ENCODE measurements at regions of chr18 and their contacts with region 1.

Region 1: DNA sequence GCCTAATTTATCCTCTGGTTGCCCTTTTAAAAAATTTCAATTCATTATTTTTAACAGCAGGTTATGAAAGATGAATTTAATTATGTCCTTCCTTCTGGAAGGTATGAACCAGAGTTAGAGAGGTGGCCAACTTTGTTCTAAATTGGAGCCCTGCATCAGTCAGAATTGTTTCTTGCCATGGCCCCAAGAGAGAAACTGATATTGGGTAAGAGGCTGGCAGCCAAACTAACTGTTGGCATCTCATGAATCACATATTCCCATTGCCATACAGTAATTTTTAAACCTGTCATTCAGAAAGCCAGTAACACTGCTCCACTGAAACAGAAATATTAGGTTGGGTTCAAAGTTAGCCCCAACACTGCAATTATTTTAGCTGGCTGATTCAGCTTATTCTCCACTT is 67.4 kb downstream of the SMAD2 start:
- DNase-seq: no peak
- ATAC-seq: no peak
- H3K4me3 Mint-ChIP-seq: no peak overlapping the region
- H3K27ac Mint-ChIP-seq: no peak overlapping the region
- H3K4me1 Mint-ChIP-seq: peaks cover 5% of the 10 kb centered on the region
- H3K27me3 Mint-ChIP-seq: no peaks in the 10 kb centered on the region

Region 2: GRCh38 chr18:47323158-47323557 is 539.9 kb before region 1 on chr18:
- CTCF ChIA-PET with region 1: no interaction called
- POLR2A ChIA-PET with region 1: no interaction called
- intact Hi-C with region 1: loop called in 1 of 2 experiments (anchors 10 kb)
- DNase-seq: no peak
- ATAC-seq: peak; percentile 84
- H3K4me3 Mint-ChIP-seq: no peak overlapping the region
- H3K27ac Mint-ChIP-seq: no peak overlapping the region
- H3K4me1 Mint-ChIP-seq: no peaks in the 10 kb centered on the region
- H3K27me3 Mint-ChIP-seq: peaks cover 5% of the 10 kb centered on the region

Region 3: DNA sequence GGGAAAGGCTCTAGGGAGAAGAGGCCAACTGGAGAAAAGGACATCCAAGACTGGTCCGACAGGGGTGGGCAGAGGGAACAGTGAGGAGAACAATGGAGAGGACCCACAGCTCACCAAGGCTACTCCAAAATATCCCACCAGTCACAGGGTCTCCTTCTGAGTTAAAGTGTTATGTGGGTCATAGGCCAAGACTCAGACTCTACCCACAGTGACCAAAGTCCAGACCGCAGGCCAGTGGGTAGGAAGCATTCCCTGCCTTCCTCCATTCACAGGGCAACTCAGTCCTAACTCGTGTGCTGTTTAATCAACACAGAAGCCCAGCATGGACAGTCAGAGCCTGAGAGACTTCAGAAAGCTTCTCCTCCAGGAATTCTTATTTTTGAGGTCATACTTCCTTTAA is 193.2 kb before region 1 on chr18:
- CTCF ChIA-PET with region 1: no interaction called
- POLR2A ChIA-PET with region 1: no interaction called
- intact Hi-C with region 1: no loop called
- DNase-seq: no peak
- ATAC-seq: no peak
- H3K4me3 Mint-ChIP-seq: no peak overlapping the region
- H3K27ac Mint-ChIP-seq: no peak overlapping the region
- H3K4me1 Mint-ChIP-seq: no peaks in the 10 kb centered on the region
- H3K27me3 Mint-ChIP-seq: peaks cover 14% of the 10 kb centered on the region